HEK293 (cell line): ENCODE measurements at regions of chr1 and their contacts with region 1.

Region 1: GRCh38 chr1:230917284-230918135 is 49.2 kb upstream of the C1orf198 start:
- H3K4me3 ChIP-seq: no peak overlapping the region
- H3K27ac ChIP-seq: no peak overlapping the region
- H3K4me1 ChIP-seq: no peaks in the 10 kb centered on the region
- CTCF ChIP-seq: peak; percentile 55

Region 2: DNA sequence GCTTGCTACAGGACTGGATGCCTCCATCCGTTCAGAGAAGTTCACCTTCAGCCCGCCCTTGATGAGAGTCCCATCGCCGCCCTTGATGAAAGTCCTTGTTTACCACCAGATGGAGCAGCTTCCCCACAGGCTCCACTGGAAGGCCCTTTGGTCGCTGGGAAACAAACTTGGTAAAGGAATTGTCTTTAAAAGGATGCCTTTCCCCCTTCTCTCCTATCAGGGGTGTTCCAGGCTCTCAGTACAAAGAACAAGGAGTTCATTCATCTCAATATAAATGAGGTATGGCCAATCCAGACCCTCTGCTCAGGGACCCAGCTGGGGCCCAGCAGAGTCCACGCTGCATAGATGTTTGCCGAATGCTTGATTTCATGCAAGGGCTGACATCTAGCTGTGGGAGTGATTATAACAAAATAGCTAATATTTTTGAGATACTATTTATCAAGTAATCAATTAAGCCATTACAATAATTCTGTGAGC is 119.5 kb before region 1 on chr1:
- CTCF ChIA-PET with region 1: interaction called, 13 read pairs
- POLR2A ChIA-PET with region 1: no interaction called
- H3K4me3 ChIP-seq: no peak overlapping the region
- H3K27ac ChIP-seq: no peak overlapping the region
- H3K4me1 ChIP-seq: no peaks in the 10 kb centered on the region
- CTCF ChIP-seq: peak; percentile 87

Region 3: DNA sequence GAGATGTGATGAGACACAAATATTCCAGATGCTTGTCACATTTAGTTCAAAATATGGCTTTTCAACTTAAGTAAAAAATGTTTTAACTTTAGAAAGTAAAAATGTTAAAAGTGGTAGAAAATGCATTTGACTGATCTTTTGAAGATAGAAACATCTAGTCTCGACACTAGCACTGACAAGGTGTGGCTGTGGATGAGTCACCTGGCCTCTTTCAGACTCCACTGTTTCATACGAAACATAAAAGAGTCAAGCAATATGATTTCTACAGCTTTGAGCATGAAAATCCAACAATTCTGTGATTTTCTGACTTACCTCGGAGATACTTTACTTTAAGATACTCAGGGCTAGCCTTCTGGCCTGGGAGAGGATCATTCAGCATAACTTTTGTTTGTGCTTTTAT is 13.5 kb after region 1 on chr1:
- CTCF ChIA-PET with region 1: interaction called, 17 read pairs
- POLR2A ChIA-PET with region 1: no interaction called
- H3K4me3 ChIP-seq: no peak overlapping the region
- H3K27ac ChIP-seq: no peak overlapping the region
- H3K4me1 ChIP-seq: no peaks in the 10 kb centered on the region
- CTCF ChIP-seq: no peak

Region 4: DNA sequence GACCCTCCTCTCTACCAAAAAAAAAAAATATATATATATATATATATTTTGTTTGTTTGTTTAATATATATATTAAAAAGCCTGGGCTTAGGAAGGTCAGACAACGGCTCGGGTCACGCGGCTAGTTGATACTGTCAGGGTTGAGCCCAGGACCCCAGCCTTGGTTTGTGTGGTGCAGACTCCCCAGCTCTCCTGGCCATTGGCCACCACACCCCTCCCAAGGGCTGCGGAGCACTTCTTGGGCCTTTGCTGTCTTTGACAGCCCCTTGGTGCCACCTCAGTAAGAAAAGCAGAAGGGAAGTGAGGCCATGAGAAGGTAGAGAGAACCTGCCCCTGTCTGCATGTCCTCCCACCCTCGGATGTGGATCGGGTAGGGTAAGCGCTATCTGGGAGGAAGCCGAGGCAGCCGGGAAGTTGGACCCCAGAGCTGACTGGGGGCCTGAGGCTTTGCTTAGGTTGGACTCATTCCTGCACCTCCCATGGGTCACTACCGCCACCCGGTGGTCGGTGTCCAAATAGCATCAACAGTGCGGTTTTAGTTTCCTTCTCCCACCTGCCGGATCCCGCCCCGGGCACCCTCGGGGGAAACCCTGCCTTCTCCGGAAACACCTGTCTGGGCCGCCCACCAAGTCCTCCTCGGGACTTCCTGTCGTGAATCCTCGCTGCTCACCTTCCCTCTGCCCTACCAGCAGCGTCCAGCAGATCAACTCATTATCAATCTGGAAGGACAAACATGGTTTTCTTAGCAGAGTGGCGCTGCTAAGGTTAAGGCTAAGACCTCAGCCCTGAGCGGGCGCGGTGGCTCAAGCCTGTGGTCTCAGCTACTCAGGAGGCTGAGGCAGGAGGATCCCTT is 293.7 kb after region 1 on chr1:
- CTCF ChIA-PET with region 1: interaction called, 20 read pairs
- POLR2A ChIA-PET with region 1: no interaction called
- H3K4me3 ChIP-seq: peak overlapping the region; percentile 15
- H3K27ac ChIP-seq: no peak overlapping the region
- H3K4me1 ChIP-seq: no peaks in the 10 kb centered on the region
- CTCF ChIP-seq: peak; percentile 98